B cell (primary cell): ENCODE measurements at regions of chr1 and their contacts with region 1.

Region 1: DNA sequence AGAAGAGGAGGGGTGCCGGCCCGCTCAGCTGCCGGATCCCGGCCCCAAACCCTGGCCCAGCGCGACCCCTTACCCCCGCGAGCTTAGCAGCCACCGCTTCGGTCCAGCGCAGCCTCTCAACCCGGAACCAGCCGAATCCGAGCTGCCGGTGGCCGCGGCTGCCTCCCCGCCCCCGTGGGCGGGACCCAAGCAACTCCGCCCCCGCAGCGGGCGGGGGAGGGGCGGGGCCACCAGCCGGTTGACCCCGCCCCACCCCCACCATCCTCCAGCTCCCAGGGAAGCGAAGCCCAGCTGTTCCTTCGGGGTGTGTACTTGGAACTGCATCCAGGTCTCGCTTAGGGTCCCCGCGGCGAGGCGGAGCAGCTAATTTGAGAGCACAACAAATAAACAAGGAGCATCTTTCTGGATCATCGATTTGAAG is at the start of gene TRIM62:
- DNase-seq: peak; percentile 88
- ATAC-seq: peak; percentile 72
- H3K4me3 ChIP-seq: peak within 1 kb of the TSS; percentile 31 to 86 (median 75)
- H3K4me3 Mint-ChIP-seq: peak within 1 kb of the TSS; percentile 97
- H3K27ac ChIP-seq: peak within 1 kb of the TSS in 1 of 2 donors; percentile 31
- H3K27ac Mint-ChIP-seq: peak within 1 kb of the TSS; percentile 85
- H3K4me1 ChIP-seq: peaks cover 12 to 17% of the 10 kb centered on the region in 2 donors
- H3K4me1 Mint-ChIP-seq: peaks cover 17% of the 10 kb centered on the region
- H3K27me3 ChIP-seq: peaks cover 0 to 14% (median 8%) of the 10 kb centered on the region in 4 experiments
- H3K27me3 Mint-ChIP-seq: peaks cover 28% of the 10 kb centered on the region
- CTCF ChIP-seq: no peak
- total RNA-seq, gene TRIM62: 15.7 and 24.1 TPM in 2 replicates

Region 2: GRCh38 chr1:32964461-32965250 is 217.3 kb before region 1 on chr1 and contains the start of gene RNF19B:
- CTCF ChIA-PET with region 1: interaction called, 3 read pairs
- POLR2A ChIA-PET with region 1: no interaction called
- intact Hi-C with region 1: loop called (anchors 5 kb)
- DNase-seq: peak; percentile 97
- ATAC-seq: peak; percentile 90
- H3K4me3 ChIP-seq: peak within 1 kb of the TSS; percentile 51 to 94 (median 68)
- H3K4me3 Mint-ChIP-seq: peak within 1 kb of the TSS; percentile 91
- H3K27ac ChIP-seq: peak within 1 kb of the TSS; percentile 76 to 84
- H3K27ac Mint-ChIP-seq: peak within 1 kb of the TSS; percentile 93
- H3K4me1 ChIP-seq: peaks cover 30 to 35% of the 10 kb centered on the region in 2 donors
- H3K4me1 Mint-ChIP-seq: peaks cover 36% of the 10 kb centered on the region
- H3K27me3 ChIP-seq: no peaks in the 10 kb centered on the region
- H3K27me3 Mint-ChIP-seq: no peaks in the 10 kb centered on the region
- CTCF ChIP-seq: no peak
- total RNA-seq, gene RNF19B: 38.4 and 40.3 TPM in 2 replicates

Region 3: GRCh38 chr1:33080885-33081553 is 100.9 kb before region 1 on chr1 and contains the start of gene AZIN2:
- CTCF ChIA-PET with region 1: no interaction called
- POLR2A ChIA-PET with region 1: no interaction called
- intact Hi-C with region 1: loop called (anchors 1 kb)
- DNase-seq: peak; percentile 94
- ATAC-seq: peak; percentile 99
- H3K4me3 ChIP-seq: peak within 1 kb of the TSS; percentile 50 to 73 (median 63)
- H3K4me3 Mint-ChIP-seq: peak within 1 kb of the TSS; percentile 85
- H3K27ac ChIP-seq: no peak within 1 kb of the TSS
- H3K27ac Mint-ChIP-seq: peak within 1 kb of the TSS; percentile 47
- H3K4me1 ChIP-seq: peaks cover 14 to 19% of the 10 kb centered on the region in 2 donors
- H3K4me1 Mint-ChIP-seq: peaks cover 21% of the 10 kb centered on the region
- H3K27me3 ChIP-seq: peaks cover 0 to 12% (median 4%) of the 10 kb centered on the region in 4 experiments
- H3K27me3 Mint-ChIP-seq: peaks cover 7% of the 10 kb centered on the region
- CTCF ChIP-seq: no peak
- total RNA-seq, gene AZIN2: 5.4 and 5.9 TPM in 2 replicates

Region 4: DNA sequence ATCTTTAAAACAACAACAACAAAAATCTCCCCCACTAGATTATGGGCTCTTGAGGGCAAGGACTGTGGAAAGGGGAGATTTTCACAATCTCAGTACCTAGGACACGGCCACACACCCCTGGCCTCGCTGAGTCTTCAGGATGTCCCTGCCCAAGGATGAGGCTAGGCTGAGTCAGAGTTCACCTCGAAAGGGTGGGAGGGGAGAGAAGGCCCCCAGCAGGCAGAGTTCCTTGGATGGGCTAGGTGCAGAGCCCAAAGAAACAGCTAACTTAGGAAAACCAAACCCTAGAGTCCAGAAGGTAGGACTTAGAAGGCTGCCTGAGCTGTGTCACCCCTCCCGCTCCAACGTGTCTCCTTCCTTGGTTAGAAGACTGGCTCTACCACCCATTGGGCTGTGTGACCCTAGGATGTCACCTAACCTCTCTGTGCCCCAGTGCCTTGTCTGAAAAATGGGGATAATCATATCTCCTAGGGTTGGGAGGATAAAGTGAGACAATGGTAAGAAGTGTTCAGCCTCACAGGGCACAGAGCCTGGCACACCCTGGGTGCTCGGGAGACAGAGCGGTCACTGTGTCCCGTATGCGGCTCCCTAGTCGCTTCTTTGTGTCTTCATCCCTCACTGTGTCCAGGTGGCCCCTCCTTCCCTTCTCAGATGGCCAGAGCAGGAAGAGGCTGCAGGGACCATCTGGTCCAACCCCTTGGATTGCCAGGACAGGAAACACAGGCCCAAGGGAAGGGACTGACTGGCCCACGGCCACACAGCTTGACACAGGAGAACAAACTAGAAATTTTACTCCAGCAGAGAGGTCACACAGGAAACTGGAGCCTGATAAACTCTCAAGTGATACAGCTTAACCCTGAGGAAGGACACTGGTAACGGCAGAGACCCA is 11.3 kb before region 1 on chr1:
- CTCF ChIA-PET with region 1: no interaction called
- POLR2A ChIA-PET with region 1: interaction called, 11 read pairs
- intact Hi-C with region 1: no loop called
- DNase-seq: no peak
- ATAC-seq: no peak
- H3K4me3 ChIP-seq: no peak overlapping the region
- H3K4me3 Mint-ChIP-seq: no peak overlapping the region
- H3K27ac ChIP-seq: no peak overlapping the region
- H3K27ac Mint-ChIP-seq: no peak overlapping the region
- H3K4me1 ChIP-seq: peaks cover 0 to 6% of the 10 kb centered on the region in 2 donors
- H3K4me1 Mint-ChIP-seq: peaks cover 15% of the 10 kb centered on the region
- H3K27me3 ChIP-seq: no peaks in the 10 kb centered on the region
- H3K27me3 Mint-ChIP-seq: no peaks in the 10 kb centered on the region
- CTCF ChIP-seq: no peak

Region 5: DNA sequence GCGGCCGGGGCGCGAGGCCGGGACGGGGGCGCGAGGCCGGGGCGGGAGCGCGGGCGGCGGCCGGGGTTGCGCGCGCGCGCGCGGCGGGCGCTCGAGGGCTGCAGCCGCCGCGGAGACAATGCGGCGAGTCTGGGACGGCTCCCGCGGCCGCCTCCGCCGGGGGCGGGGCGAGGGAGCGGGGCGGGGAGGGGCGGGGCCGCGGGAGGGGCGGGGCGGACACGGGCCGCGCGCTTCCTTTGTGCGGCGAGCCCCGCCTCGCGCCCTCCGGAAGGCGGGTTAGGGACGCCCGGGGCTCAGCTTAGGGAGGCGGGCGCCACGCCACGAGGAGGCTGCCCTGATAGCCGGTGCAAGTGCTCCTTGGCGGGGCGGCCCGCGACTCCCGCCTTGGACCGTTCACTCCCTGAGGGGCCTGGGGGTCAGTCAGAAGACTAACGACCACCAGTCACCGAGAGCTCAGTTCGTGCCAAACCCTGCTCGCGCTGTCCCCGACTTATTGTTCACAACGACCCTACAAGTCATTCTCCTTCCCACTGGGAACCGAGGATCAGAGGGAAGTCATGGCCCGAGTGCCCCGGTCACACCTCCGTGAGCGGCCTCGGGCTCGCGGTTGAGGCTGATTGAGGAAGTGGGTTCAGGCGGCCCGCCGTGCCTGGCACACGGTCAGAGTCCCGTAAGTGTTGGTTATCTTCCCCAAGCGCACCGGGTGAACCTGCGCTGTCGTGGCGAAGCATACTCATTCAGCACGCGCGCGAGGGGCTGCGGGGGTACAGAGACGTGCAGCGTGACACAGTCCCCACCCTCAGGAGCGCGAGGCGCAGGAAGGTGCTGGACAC is 168.1 kb after region 1 on chr1:
- CTCF ChIA-PET with region 1: no interaction called
- POLR2A ChIA-PET with region 1: no interaction called
- intact Hi-C with region 1: loop called (anchors 1 kb)
- DNase-seq: peak; percentile 88
- ATAC-seq: peak; percentile 86
- H3K4me3 ChIP-seq: peak overlapping the region; percentile 45 to 76 (median 74)
- H3K4me3 Mint-ChIP-seq: peak overlapping the region; percentile 98
- H3K27ac ChIP-seq: peak overlapping the region; percentile 71 to 81
- H3K27ac Mint-ChIP-seq: peak overlapping the region; percentile 90
- H3K4me1 ChIP-seq: peaks cover 16 to 20% of the 10 kb centered on the region in 2 donors
- H3K4me1 Mint-ChIP-seq: peaks cover 36% of the 10 kb centered on the region
- H3K27me3 ChIP-seq: peaks cover 0 to 3% (median 0%) of the 10 kb centered on the region in 4 experiments
- H3K27me3 Mint-ChIP-seq: no peaks in the 10 kb centered on the region
- CTCF ChIP-seq: no peak